H1 (cell line): ENCODE measurements at regions of chr6 and their contacts with region 1.

Region 1: DNA sequence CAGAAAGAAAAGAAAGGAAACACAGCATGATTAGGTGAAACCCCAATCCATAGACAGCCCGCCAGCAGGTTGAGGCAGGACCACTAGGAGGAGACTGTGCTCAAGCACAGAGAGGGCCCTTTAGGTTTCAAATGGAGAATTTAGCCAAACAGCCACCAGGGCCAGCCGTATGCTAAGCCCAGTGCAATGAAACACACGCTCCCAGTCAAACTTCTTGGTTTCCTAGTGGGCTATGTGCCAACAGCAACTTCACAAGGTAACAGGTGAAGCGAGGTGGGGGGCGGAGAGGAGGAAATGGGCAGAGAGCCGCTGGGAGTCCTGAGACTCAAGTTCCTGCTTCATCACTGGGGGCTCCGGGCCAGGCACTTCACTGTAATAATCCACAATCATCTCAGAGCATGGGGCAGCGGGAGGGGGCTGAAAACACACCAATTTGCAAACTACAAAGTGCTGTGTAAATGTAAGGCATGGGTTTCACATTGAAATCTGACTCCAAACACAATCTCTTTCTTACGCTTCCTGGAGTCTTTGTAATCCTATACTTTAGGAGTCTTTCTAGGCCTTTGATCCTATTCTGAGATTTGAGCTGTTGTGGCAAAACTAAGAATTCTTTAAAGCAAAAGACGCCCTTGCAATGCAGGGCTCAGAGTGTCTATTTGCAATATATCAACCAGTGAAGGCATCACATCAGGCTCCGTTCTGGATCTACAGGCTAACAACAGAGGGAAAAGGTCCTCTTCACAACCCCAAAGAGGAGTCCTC is 117.3 kb downstream of the OPRM1 start:
- DNase-seq: peak in 1 of 2 experiments; percentile 48
- H3K4me3 ChIP-seq: no peak overlapping the region
- H3K27ac ChIP-seq: no peak overlapping the region
- H3K4me1 ChIP-seq: no peaks in the 10 kb centered on the region
- H3K27me3 ChIP-seq: no peaks in the 10 kb centered on the region
- CTCF ChIP-seq: peak; percentile 75 to 94 (median 77)
- EP300 ChIP-seq: no peak
- POLR2A ChIP-seq: no peak
- RAD21 ChIP-seq: peak; percentile 84 to 86

Region 2: GRCh38 chr6:154140743-154141142 is 15.6 kb before region 1 on chr6:
- CTCF ChIA-PET with region 1: interaction called, 11 read pairs
- POLR2A ChIA-PET with region 1: no interaction called
- DNase-seq: no peak
- H3K4me3 ChIP-seq: no peak overlapping the region
- H3K27ac ChIP-seq: no peak overlapping the region
- H3K4me1 ChIP-seq: peaks cover 0 to 4% (median 0%) of the 10 kb centered on the region in 4 experiments; a peak in 1 of 7 replicates
- H3K27me3 ChIP-seq: no peaks in the 10 kb centered on the region
- CTCF ChIP-seq: no peak
- EP300 ChIP-seq: no peak
- POLR2A ChIP-seq: no peak
- RAD21 ChIP-seq: no peak

Region 3: GRCh38 chr6:154197196-154197860 is 41.0 kb after region 1 on chr6:
- CTCF ChIA-PET with region 1: no interaction called
- POLR2A ChIA-PET with region 1: no interaction called
- DNase-seq: no peak
- H3K4me3 ChIP-seq: no peak overlapping the region
- H3K27ac ChIP-seq: no peak overlapping the region
- H3K4me1 ChIP-seq: no peaks in the 10 kb centered on the region
- H3K27me3 ChIP-seq: no peaks in the 10 kb centered on the region
- CTCF ChIP-seq: no peak
- EP300 ChIP-seq: no peak
- POLR2A ChIP-seq: no peak
- RAD21 ChIP-seq: no peak

Region 4: GRCh38 chr6:154276810-154277628 is 120.7 kb after region 1 on chr6:
- CTCF ChIA-PET with region 1: interaction called, 30 read pairs
- POLR2A ChIA-PET with region 1: no interaction called
- DNase-seq: no peak
- H3K4me3 ChIP-seq: no peak overlapping the region
- H3K27ac ChIP-seq: no peak overlapping the region
- H3K4me1 ChIP-seq: no peaks in the 10 kb centered on the region
- H3K27me3 ChIP-seq: no peaks in the 10 kb centered on the region
- CTCF ChIP-seq: peak in 1 of 3 experiments; percentile 30; a peak in 1 of 4 replicates
- EP300 ChIP-seq: no peak
- POLR2A ChIP-seq: no peak
- RAD21 ChIP-seq: peak in 1 of 2 experiments; percentile 42

Region 5: DNA sequence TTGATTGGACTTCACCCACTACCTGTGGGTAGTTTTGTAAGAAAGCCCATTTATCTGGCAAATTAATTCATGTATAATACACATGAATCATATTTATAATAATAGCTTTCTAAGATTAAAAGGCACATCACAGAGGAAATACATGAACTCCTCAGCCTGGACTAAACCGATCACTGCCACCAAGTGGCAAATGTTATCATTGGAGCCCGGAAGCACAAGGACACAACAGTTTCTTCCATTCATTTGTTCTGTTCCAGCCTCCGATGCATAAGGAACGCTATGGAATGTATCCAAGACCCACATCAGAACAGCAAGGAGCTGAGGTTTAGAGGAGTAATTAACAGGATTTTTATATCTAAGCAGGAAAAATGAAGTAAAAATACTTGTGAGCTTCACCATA is 214.2 kb after region 1 on chr6:
- CTCF ChIA-PET with region 1: interaction called, 11 read pairs
- POLR2A ChIA-PET with region 1: no interaction called
- DNase-seq: no peak
- H3K4me3 ChIP-seq: no peak overlapping the region
- H3K27ac ChIP-seq: no peak overlapping the region
- H3K4me1 ChIP-seq: no peaks in the 10 kb centered on the region
- H3K27me3 ChIP-seq: no peaks in the 10 kb centered on the region
- CTCF ChIP-seq: peak; percentile 18 to 46 (median 46); a peak in 3 of 4 replicates
- EP300 ChIP-seq: no peak
- POLR2A ChIP-seq: no peak
- RAD21 ChIP-seq: peak; percentile 53 to 64